PC-9 (cell line): ENCODE measurements at regions of chr11 and their contacts with region 1.

Region 1: DNA sequence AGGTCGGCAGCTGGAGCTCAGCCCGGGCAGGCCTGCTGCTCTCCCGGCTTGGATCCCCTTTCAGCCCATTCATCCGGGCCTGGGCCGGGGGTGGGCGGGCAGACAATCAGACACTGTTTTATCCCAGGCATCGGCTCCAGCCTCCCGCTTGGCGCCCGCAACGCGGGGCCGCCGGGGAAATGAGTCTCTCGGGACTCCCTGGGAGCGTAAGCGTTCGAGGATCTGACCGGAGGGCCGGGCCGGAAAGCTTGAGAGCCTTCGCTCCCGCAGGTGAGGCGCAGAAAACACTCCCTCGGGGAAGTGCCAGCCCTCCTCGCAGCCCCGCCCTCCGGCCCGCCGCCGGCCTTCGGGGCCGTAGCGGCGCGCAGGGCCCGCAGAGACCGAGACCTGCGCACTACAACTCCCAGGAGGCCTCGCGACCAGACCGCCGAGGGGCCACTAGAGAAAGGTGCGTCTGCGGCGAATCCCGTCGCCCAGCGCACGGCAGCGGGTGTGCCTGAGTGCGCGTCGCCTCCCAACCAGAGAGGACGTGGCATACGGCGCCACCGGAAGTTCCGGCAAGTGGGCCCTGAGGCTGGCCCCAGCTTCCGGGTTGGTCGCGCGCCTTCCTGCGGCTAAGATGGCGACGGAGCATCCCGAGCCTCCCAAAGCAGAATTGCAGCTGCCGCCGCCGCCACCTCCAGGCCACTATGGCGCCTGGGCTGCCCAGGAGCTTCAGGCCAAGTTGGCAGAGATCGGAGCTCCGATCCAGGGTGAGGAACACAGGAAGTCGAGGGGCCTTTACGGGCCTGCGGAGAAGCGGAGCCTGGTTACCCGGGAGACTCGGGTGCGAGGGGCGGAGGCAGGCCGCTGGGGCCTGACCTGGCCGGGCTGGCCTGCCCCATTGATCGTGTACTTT is at the start of gene SF3B2:
- DNase-seq: peak; percentile 98 to 99
- H3K4me3 ChIP-seq: peak within 1 kb of the TSS; percentile 99
- H3K27ac ChIP-seq: peak within 1 kb of the TSS; percentile 75
- H3K4me1 ChIP-seq: peaks cover 20% of the 10 kb centered on the region
- H3K27me3 ChIP-seq: no peaks in the 10 kb centered on the region
- CTCF ChIP-seq: no peak
- total RNA-seq, gene SF3B2: 221 and 224 TPM in 2 replicates

Region 2: GRCh38 chr11:66035653-66036333 is 16.2 kb before region 1 on chr11:
- CTCF ChIA-PET with region 1: no interaction called
- POLR2A ChIA-PET with region 1: interaction called, 11 read pairs
- intact Hi-C with region 1: no loop called
- DNase-seq: no peak
- H3K4me3 ChIP-seq: no peak overlapping the region
- H3K27ac ChIP-seq: no peak overlapping the region
- H3K4me1 ChIP-seq: no peaks in the 10 kb centered on the region
- H3K27me3 ChIP-seq: no peaks in the 10 kb centered on the region
- CTCF ChIP-seq: no peak

Region 3: DNA sequence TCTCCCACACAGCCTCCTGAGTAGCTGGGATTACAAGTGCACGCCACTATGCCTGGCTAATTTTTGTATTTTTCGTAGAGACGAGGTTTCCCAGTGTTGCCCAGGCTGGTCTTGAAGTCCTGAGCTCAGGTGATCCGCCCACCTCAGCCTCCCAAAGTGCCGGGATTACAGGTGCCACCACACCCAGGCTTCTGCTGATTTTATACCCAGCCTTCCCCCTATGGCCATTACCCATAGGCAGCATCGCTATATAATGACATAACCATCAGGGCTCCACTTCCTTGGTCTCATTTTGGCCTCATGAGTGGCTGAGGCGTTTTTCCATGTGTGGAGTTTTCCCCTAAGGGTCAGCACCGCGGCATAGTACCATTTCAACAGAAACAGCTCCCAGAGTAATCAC is 155.9 kb after region 1 on chr11:
- CTCF ChIA-PET with region 1: no interaction called
- POLR2A ChIA-PET with region 1: interaction called, 20 read pairs
- intact Hi-C with region 1: no loop called
- DNase-seq: no peak
- H3K4me3 ChIP-seq: no peak overlapping the region
- H3K27ac ChIP-seq: no peak overlapping the region
- H3K4me1 ChIP-seq: 0 out of 2 replicates have a peak, but pooled peaks cover 5% of the 10 kb centered on the region
- H3K27me3 ChIP-seq: no peaks in the 10 kb centered on the region
- CTCF ChIP-seq: no peak